ENCODE measurements at regions of chr7 and their contacts with region 1.

Region 1: DNA sequence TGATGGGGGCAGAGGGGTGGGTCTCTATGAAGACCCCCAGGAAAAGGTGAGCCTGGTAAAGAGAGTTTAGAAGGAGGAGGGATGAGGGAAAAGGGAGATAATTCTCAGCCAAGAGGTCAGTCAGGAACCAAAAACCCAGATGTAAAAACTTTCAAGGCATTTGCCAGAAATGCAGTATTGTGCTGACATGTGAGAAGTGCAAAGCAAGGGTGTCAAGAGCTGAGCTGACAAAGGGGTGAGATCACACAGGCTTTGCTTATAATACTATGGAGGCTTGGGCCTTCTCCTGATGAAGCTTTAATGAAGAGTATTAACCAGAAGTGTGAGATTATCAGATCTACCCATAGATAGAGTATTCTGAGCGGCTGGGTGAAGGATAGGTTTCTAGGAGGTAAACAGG is 22.3 kb upstream of the IFRD1 start:
- DNase-seq: no peak
- H3K4me3 ChIP-seq: no peak overlapping the region
- H3K27ac ChIP-seq: no peak overlapping the region
- H3K4me1 ChIP-seq: peaks cover 0 to 7% of the 10 kb centered on the region in 2 donors
- H3K27me3 ChIP-seq: no peaks in the 10 kb centered on the region
- CTCF ChIP-seq: no peak
- POLR2A ChIP-seq: no peak

Region 2: GRCh38 chr7:112452102-112452888 is 24.3 kb after region 1 on chr7:
- intact Hi-C with region 1: loop called (anchors 2 kb)
- DNase-seq: peak in 1 of 2 donors; percentile 66
- H3K4me3 ChIP-seq: peak overlapping the region; percentile 97 to 99 (median 97)
- H3K27ac ChIP-seq: peak overlapping the region; percentile 99
- H3K4me1 ChIP-seq: no peaks in the 10 kb centered on the region
- H3K27me3 ChIP-seq: no peaks in the 10 kb centered on the region
- CTCF ChIP-seq: no peak
- POLR2A ChIP-seq: peak; percentile 35

Region 3: GRCh38 chr7:113109718-113110117 is 681.7 kb after region 1 on chr7:
- intact Hi-C with region 1: no loop called
- DNase-seq: no peak
- H3K4me3 ChIP-seq: no peak overlapping the region
- H3K27ac ChIP-seq: no peak overlapping the region
- H3K4me1 ChIP-seq: no peaks in the 10 kb centered on the region
- H3K27me3 ChIP-seq: no peaks in the 10 kb centered on the region
- CTCF ChIP-seq: no peak
- POLR2A ChIP-seq: no peak